PC-3 (cell line): ENCODE measurements at regions of chr7 and their contacts with region 1.

Region 1: DNA sequence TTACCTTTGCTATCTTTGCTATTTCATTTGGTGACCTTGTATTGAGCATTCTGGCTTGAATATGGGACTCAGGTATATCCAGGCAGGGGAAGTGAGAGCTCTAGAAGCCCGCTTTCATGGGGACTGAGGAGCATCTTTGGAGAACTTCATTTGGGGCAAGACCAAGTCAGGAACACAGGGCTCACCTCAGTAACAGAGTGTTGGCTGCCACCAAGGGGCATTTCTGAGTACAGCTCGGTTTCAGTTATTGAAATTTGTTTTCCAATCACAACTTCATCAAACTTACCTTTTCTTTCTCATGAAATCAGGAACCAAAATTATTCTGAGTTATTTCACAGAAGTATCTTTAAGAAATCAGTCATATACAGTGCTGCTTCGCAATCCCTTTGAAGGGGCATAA is 337.2 kb downstream of the C7orf25 start:
- DNase-seq: peak; percentile 34
- ATAC-seq: peak; percentile 80
- H3K4me3 ChIP-seq: no peak overlapping the region
- H3K27ac ChIP-seq: no peak overlapping the region
- H3K4me1 ChIP-seq: peaks cover 9% of the 10 kb centered on the region
- H3K27me3 ChIP-seq: no peaks in the 10 kb centered on the region
- CTCF ChIP-seq: peak; percentile 67

Region 2: DNA sequence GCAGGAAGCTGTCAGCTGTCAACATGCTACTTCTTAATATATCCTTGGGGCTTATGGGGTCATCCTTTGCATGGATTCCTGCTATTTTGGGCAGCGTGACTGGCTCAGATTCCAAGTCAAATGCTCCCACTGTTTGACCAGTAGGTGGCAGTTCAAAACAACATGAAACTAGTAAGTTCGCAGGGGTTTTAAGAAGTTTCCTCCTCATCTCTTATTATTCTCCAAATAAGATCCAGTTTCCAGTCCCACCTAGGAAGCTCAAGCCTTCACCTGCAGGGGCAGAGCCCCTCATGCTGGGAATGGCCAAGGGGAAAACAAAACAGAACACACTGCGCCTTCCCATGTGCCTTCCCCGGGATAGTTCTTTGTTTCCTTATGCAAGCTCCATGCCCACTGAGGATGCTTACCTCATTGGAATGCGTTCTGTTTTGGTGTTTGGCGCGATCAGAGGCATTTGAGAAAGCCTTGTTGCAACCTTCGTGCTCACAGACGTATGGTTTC is 597.5 kb before region 1 on chr7:
- CTCF ChIA-PET with region 1: interaction called, 4 read pairs
- POLR2A ChIA-PET with region 1: no interaction called
- intact Hi-C with region 1: loop called (anchors 10 kb)
- DNase-seq: peak; percentile 67
- ATAC-seq: peak; percentile 67
- H3K4me3 ChIP-seq: no peak overlapping the region
- H3K27ac ChIP-seq: no peak overlapping the region
- H3K4me1 ChIP-seq: peaks cover 9% of the 10 kb centered on the region
- H3K27me3 ChIP-seq: no peaks in the 10 kb centered on the region
- CTCF ChIP-seq: peak; percentile 84

Region 3: GRCh38 chr7:42605406-42606192 is 30.9 kb after region 1 on chr7:
- CTCF ChIA-PET with region 1: no interaction called
- POLR2A ChIA-PET with region 1: interaction called, 12 read pairs
- intact Hi-C with region 1: no loop called
- DNase-seq: peak; percentile 15
- ATAC-seq: peak; percentile 48; the same call in 1 of the 2 replicates
- H3K4me3 ChIP-seq: no peak overlapping the region
- H3K27ac ChIP-seq: no peak overlapping the region
- H3K4me1 ChIP-seq: no peaks in the 10 kb centered on the region
- H3K27me3 ChIP-seq: no peaks in the 10 kb centered on the region
- CTCF ChIP-seq: no peak